Activated CD4-positive, alpha-beta memory T cell treated with anti-CD3 and anti-CD28 coated beads, Interleukin-2, amount 10 ng/mL, durations not matched to agents 7 days and 5 days (primary cell): ENCODE measurements at regions of chr17 and their contacts with region 1.

Region 1: DNA sequence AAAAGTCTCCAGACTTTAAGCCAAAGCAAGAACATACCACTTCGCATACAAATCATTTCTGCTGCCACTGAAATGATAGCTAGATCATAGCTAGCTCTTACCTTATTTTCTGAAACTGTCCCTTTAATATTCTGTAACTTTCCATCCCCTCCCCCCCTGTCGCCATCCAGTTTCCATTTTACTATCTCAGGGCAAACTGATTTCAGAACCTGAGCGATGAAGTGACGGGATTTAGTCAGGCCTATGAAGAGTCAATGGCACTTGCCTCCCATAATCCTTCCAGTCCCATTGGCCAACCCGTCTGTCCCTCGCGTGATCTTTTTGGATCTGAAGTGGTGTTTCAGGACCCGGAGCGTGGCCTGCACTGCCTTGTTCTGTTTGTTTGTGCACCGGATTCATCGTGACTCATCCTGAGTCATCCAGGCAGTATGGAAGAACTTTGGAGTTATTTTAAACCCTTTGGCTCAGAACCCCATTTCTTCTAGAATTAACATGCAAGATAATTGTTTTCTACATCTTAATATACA is 199.8 kb upstream of the CHMP6 start:
- DNase-seq: peak; percentile 66
- H3K4me3 Mint-ChIP-seq: peak overlapping the region; percentile 74
- H3K27ac Mint-ChIP-seq: peak overlapping the region; percentile 97
- H3K4me1 Mint-ChIP-seq: peaks cover 80% of the 10 kb centered on the region
- H3K27me3 Mint-ChIP-seq: no peaks in the 10 kb centered on the region

Region 2: GRCh38 chr17:80761110-80761871 is 30.5 kb before region 1 on chr17:
- CTCF ChIA-PET with region 1: interaction called, 5 read pairs
- POLR2A ChIA-PET with region 1: interaction called, 25 read pairs
- DNase-seq: peak; percentile 81
- H3K4me3 Mint-ChIP-seq: peak overlapping the region; percentile 63
- H3K27ac Mint-ChIP-seq: peak overlapping the region; percentile 98
- H3K4me1 Mint-ChIP-seq: peaks cover 79% of the 10 kb centered on the region
- H3K27me3 Mint-ChIP-seq: no peaks in the 10 kb centered on the region

Region 3: GRCh38 chr17:80811181-80812105 is 19.6 kb after region 1 on chr17:
- CTCF ChIA-PET with region 1: interaction called, 8 read pairs
- POLR2A ChIA-PET with region 1: interaction called, 36 read pairs
- DNase-seq: peak; percentile 64
- H3K4me3 Mint-ChIP-seq: peak overlapping the region; percentile 24
- H3K27ac Mint-ChIP-seq: peak overlapping the region; percentile 99
- H3K4me1 Mint-ChIP-seq: peaks cover 60% of the 10 kb centered on the region
- H3K27me3 Mint-ChIP-seq: no peaks in the 10 kb centered on the region

Region 4: GRCh38 chr17:80855948-80856862 is 64.4 kb after region 1 on chr17:
- CTCF ChIA-PET with region 1: interaction called, 4 read pairs
- POLR2A ChIA-PET with region 1: interaction called, 11 read pairs
- DNase-seq: peak; percentile 94
- H3K4me3 Mint-ChIP-seq: peak overlapping the region; percentile 26
- H3K27ac Mint-ChIP-seq: peak overlapping the region; percentile 98
- H3K4me1 Mint-ChIP-seq: peaks cover 91% of the 10 kb centered on the region
- H3K27me3 Mint-ChIP-seq: no peaks in the 10 kb centered on the region